ENCODE measurements at regions of chr4 and their contacts with region 1.

Region 1: GRCh38 chr4:139453371-139454110 is 380 bp upstream of the RAB33B start:
- DNase-seq: peak; percentile 97 to 99 (median 98)
- H3K4me3 ChIP-seq: peak overlapping the region; percentile 68 to 71
- H3K4me3 Mint-ChIP-seq: peak overlapping the region; percentile 95 to 99 (median 97)
- H3K27ac ChIP-seq: peak overlapping the region; percentile 89
- H3K27ac Mint-ChIP-seq: peak overlapping the region; percentile 98 to 100 (median 99)
- H3K4me1 ChIP-seq: peaks cover 59% of the 10 kb centered on the region
- H3K4me1 Mint-ChIP-seq: peaks cover 48 to 73% (median 61%) of the 10 kb centered on the region in 4 donors
- H3K27me3 ChIP-seq: no peaks in the 10 kb centered on the region
- H3K27me3 Mint-ChIP-seq: no peaks in the 10 kb centered on the region

Region 2: DNA sequence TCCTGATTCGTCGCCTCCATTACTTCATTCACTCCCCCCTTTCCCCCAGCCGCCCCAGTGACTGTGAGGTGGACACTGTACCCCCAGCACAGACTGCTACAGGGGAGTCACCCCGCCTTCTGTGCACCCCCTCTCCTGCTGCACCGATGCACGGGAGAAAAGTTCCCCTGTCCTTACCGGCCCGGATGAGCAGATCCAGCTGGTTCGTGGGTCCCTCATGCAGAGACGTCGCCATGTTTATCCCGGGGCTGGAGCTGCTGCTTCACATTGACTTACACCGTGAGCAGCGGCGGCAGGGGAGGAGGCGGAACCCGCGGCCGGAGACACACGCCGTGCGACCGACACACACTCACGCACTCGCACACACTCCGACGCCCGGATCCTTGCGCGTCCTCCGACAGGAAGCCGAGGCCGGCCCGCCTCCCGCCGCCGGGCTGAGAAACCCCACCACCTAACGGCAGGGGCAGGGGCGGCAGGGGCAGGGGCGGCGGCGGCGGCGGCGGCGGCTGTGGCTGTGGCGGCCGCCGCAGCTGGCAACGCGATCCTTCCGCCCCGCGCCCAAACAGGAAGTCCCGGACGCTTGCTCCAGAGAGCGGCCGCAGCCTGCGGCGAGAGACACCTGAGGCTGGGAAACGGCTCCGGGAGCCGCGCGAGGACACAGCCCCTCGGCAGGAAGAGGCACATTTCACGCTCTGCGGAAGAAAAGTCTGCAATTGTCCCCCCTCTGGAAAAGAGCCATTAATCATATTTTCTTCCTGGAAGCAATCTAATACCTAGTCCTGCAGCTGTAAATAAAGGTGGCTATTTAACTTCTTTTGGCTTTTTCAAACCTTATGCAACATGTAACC is 369.4 kb before region 1 on chr4:
- CTCF ChIA-PET with region 1: no interaction called
- POLR2A ChIA-PET with region 1: interaction called, 25 read pairs
- intact Hi-C with region 1: loop called (anchors 1 kb)
- DNase-seq: peak; percentile 84 to 89 (median 85)
- H3K4me3 ChIP-seq: peak overlapping the region; percentile 73 to 99
- H3K4me3 Mint-ChIP-seq: peak overlapping the region; percentile 89 to 100 (median 92)
- H3K27ac ChIP-seq: peak overlapping the region; percentile 96
- H3K27ac Mint-ChIP-seq: peak overlapping the region; percentile 91 to 97 (median 94)
- H3K4me1 ChIP-seq: peaks cover 37% of the 10 kb centered on the region
- H3K4me1 Mint-ChIP-seq: peaks cover 26 to 52% (median 36%) of the 10 kb centered on the region in 4 donors
- H3K27me3 ChIP-seq: no peaks in the 10 kb centered on the region
- H3K27me3 Mint-ChIP-seq: no peaks in the 10 kb centered on the region

Region 3: GRCh38 chr4:139301113-139301820 is 152.3 kb before region 1 on chr4 and contains the start of gene NAA15:
- CTCF ChIA-PET with region 1: interaction called, 3 read pairs
- POLR2A ChIA-PET with region 1: interaction called, 27 read pairs
- intact Hi-C with region 1: loop called (anchors 1 kb)
- DNase-seq: peak; percentile 97 to 99 (median 97)
- H3K4me3 ChIP-seq: peak within 1 kb of the TSS; percentile 69 to 94
- H3K4me3 Mint-ChIP-seq: peak within 1 kb of the TSS; percentile 96 to 100 (median 99)
- H3K27ac ChIP-seq: peak within 1 kb of the TSS; percentile 98
- H3K27ac Mint-ChIP-seq: peak within 1 kb of the TSS; percentile 94 to 100 (median 99)
- H3K4me1 ChIP-seq: peaks cover 56% of the 10 kb centered on the region
- H3K4me1 Mint-ChIP-seq: peaks cover 22 to 73% (median 43%) of the 10 kb centered on the region in 4 donors
- H3K27me3 ChIP-seq: no peaks in the 10 kb centered on the region
- H3K27me3 Mint-ChIP-seq: no peaks in the 10 kb centered on the region
- total RNA-seq, gene NAA15: 45.8 to 46.5 TPM

Region 4: GRCh38 chr4:139530833-139531427 is 77.4 kb after region 1 on chr4:
- CTCF ChIA-PET with region 1: interaction called, 3 read pairs
- POLR2A ChIA-PET with region 1: interaction called, 3 read pairs
- intact Hi-C with region 1: loop called (anchors 2 kb)
- DNase-seq: peak; percentile 41 to 62 (median 57)
- H3K4me3 ChIP-seq: no peak overlapping the region
- H3K4me3 Mint-ChIP-seq: peak overlapping the region in 1 of 8 donors; percentile 27
- H3K27ac ChIP-seq: no peak overlapping the region
- H3K27ac Mint-ChIP-seq: peak overlapping the region in 4 of 7 donors; percentile 24 to 81 (median 61)
- H3K4me1 ChIP-seq: peaks cover 8% of the 10 kb centered on the region
- H3K4me1 Mint-ChIP-seq: peaks cover 8 to 17% (median 14%) of the 10 kb centered on the region in 4 donors
- H3K27me3 ChIP-seq: no peaks in the 10 kb centered on the region
- H3K27me3 Mint-ChIP-seq: no peaks in the 10 kb centered on the region

Region 5: DNA sequence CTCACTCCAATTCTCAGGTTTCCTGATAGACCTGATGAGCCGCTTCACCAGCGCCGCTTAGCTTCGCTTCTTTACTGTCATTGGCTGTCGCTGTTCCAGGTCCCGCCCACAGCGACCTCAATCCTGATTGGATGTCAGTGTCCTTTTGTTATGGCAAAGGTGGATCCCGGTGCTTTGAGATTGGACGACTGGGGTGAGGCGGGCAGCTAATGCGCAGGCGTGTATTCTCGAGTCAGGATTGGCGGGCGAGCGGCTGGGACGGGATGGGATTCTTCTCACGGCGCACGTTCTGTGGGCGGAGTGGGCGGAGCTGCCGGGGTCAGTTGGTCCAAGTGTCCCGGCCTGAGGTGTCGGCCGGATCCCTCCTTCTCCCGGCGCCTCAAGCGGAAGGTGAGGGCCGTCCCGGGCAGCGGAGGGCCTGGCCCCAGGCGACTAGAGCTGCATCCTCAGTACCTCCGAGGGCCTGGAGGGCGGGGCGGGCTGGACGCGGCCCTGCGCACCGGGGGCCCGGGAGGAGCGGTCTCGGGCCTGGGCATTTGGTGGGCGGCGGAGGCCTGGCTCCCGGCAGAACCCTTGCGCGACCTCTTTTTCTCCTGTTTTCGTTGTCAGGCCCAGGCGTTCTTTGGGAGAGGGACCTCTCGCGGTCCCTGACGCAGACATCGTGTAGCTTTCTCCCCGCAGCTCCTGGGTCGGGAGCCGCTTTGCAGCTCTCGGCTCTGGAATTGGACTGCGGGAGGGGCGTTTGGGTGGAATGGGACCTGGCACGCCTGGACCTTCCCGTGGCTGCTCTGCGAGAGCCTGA is 920.0 kb after region 1 on chr4 and contains the start of gene SCOC:
- CTCF ChIA-PET with region 1: no interaction called
- POLR2A ChIA-PET with region 1: interaction called, 5 read pairs
- intact Hi-C with region 1: loop called (anchors 5 kb)
- DNase-seq: peak; percentile 95 to 99 (median 96)
- H3K4me3 ChIP-seq: peak within 1 kb of the TSS; percentile 72 to 75
- H3K4me3 Mint-ChIP-seq: peak within 1 kb of the TSS in 3 of 8 donors; percentile 83 to 90 (median 87)
- H3K27ac ChIP-seq: peak within 1 kb of the TSS; percentile 69
- H3K27ac Mint-ChIP-seq: peak within 1 kb of the TSS in 6 of 7 donors; percentile 47 to 87 (median 76)
- H3K4me1 ChIP-seq: peaks cover 23% of the 10 kb centered on the region
- H3K4me1 Mint-ChIP-seq: peaks cover 24 to 37% (median 28%) of the 10 kb centered on the region in 4 donors
- H3K27me3 ChIP-seq: no peaks in the 10 kb centered on the region
- H3K27me3 Mint-ChIP-seq: no peaks in the 10 kb centered on the region
- total RNA-seq, gene SCOC: 21.8 to 22.8 TPM

Region 6: GRCh38 chr4:141220655-141221605 is 1767.4 kb after region 1 on chr4 and contains the start of gene ZNF330:
- CTCF ChIA-PET with region 1: no interaction called
- POLR2A ChIA-PET with region 1: no interaction called
- intact Hi-C with region 1: loop called (anchors 2 kb)
- DNase-seq: peak; percentile 81 to 92 (median 87)
- H3K4me3 ChIP-seq: peak within 1 kb of the TSS; percentile 42 to 95
- H3K4me3 Mint-ChIP-seq: peak within 1 kb of the TSS; percentile 96 to 99 (median 98)
- H3K27ac ChIP-seq: peak within 1 kb of the TSS; percentile 92
- H3K27ac Mint-ChIP-seq: peak within 1 kb of the TSS; percentile 93 to 99 (median 97)
- H3K4me1 ChIP-seq: peaks cover 22% of the 10 kb centered on the region
- H3K4me1 Mint-ChIP-seq: peaks cover 27 to 49% (median 37%) of the 10 kb centered on the region in 4 donors
- H3K27me3 ChIP-seq: no peaks in the 10 kb centered on the region
- H3K27me3 Mint-ChIP-seq: no peaks in the 10 kb centered on the region
- total RNA-seq, gene ZNF330: 39.8 to 45.3 TPM